Tibial artery (tissue), 4 donors: ENCODE measurements at regions of chr15 and their contacts with region 1.

Region 1: GRCh38 chr15:50675536-50676144 is 11.0 kb downstream of the TRPM7 start:
- DNase-seq: no peak
- H3K4me3 ChIP-seq: no peak overlapping the region
- H3K27ac ChIP-seq: no peak overlapping the region
- H3K4me1 ChIP-seq: peaks cover 0 to 6% (median 2%) of the 10 kb centered on the region in 4 donors
- H3K27me3 ChIP-seq: no peaks in the 10 kb centered on the region
- CTCF ChIP-seq: peak; percentile 71 to 75

Region 2: DNA sequence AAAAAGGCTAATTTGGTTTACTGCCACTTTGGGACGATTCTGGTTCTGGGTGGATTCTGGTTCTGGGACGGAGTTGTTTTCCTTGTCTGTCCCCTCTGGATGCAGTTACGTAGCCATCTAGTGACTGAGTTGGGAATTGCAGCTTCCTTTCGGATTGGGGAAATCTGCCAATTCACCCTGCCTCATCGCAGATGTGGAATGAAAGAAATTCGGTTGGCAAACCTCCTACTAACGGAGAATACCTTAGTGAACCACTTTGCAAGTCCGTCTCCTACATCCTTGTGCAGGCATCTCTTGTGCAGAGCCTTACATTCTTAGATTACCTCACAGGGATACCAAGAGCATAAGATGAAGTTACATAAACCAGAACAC is 201.3 kb after region 1 on chr15:
- intact Hi-C with region 1: loop called (anchors 2 kb)
- DNase-seq: peak; percentile 72 to 74
- H3K4me3 ChIP-seq: peak overlapping the region; percentile 27 to 40
- H3K27ac ChIP-seq: peak overlapping the region; percentile 4 to 30
- H3K4me1 ChIP-seq: peaks cover 0 to 6% (median 2%) of the 10 kb centered on the region in 4 donors
- H3K27me3 ChIP-seq: no peaks in the 10 kb centered on the region
- CTCF ChIP-seq: peak; percentile 91 to 95

Region 3: GRCh38 chr15:50908210-50909009 is 232.8 kb after region 1 on chr15 and contains the start of gene AP4E1:
- intact Hi-C with region 1: loop called (anchors 10 kb)
- DNase-seq: peak; percentile 84 to 94
- H3K4me3 ChIP-seq: peak within 1 kb of the TSS; percentile 88 to 97
- H3K27ac ChIP-seq: peak within 1 kb of the TSS; percentile 90 to 92
- H3K4me1 ChIP-seq: peaks cover 0 to 34% (median 19%) of the 10 kb centered on the region in 4 donors
- H3K27me3 ChIP-seq: no peaks in the 10 kb centered on the region
- CTCF ChIP-seq: peak; percentile 97 to 98